Calu3 (cell line): ENCODE measurements at regions of chr7 and their contacts with region 1.

Region 1: DNA sequence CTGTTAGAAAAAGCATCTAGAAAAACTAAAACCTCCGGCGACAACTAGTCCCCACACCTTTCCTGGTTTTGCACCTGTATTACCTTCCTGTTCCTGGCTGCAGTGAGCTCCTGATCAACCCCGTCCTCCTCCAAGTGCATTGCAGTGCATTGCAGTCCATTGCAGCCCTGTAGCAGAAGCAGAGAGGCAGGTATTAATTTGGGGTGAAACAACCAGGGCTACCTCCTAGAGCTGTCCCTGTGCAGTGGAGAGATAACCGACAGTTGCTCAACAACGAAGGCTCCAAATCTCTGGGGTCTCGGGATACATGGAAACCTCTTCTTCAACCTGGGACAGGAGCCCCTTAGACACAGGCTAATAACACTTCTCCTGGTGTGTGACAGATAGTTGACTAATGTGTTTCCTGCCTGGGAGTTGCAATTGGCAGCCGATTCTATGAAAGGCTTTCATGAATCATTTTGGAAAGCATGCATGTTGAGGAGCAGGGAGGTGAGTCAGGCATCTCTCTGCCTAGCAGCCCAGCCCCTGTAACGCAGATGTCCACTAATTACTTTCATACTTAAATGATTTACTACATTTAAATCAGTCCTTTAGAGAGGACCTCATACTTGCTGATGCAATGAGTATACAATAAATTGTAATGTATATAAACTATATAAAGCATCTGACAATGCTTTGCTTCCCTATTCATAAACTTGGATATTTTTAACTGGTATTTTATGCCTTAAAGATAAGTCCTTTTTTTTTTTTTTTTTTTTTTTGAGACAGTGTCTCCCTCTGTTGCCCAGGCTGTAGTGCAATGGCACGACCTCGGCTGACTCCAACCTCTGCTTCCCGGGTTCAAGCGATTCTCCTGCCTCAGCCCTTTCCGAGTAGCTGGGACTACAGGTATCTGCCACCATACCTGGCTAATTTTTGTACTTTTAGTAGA is 59.0 kb downstream of the PRR15 start:
- DNase-seq: peak; percentile 71
- H3K4me3 Mint-ChIP-seq: no peak overlapping the region
- H3K27ac Mint-ChIP-seq: peak overlapping the region; percentile 84
- H3K4me1 Mint-ChIP-seq: peaks cover 17% of the 10 kb centered on the region
- H3K27me3 Mint-ChIP-seq: no peaks in the 10 kb centered on the region
- CTCF ChIP-seq: no peak

Region 2: GRCh38 chr7:29488977-29489376 is 133.6 kb before region 1 on chr7:
- CTCF ChIA-PET with region 1: no interaction called
- intact Hi-C with region 1: loop called (anchors 5 kb)
- DNase-seq: no peak
- H3K4me3 Mint-ChIP-seq: no peak overlapping the region
- H3K27ac Mint-ChIP-seq: no peak overlapping the region
- H3K4me1 Mint-ChIP-seq: no peaks in the 10 kb centered on the region
- H3K27me3 Mint-ChIP-seq: no peaks in the 10 kb centered on the region
- CTCF ChIP-seq: no peak